ENCODE measurements at regions of chr2 and their contacts with region 1.

Region 1: DNA sequence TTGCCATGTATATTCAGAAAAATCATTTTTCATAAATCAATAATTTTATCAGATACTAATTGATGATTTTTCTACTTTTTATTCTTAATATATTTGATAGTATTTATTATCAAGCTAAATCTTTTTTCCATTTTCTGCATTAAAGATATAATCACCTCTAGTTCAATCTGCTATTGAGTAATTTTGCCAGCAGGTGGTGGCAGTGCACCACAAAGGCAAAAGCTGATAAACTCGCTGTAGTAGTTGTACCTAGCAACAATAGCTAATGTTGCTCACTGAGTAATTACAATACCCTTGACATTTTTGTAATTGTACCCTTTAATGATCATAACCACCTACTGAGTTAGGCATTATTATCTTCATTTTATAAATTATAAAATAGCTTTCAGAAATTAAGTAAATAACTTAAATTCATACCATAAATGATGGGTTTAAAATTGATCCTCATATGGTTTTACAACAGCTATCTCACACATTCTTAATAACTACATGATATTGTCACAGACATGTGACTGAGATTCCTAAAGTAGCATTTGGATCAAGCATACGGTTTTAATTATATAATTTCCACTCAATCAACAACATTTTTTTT is 52.0 kb upstream of the CALCRL start:
- DNase-seq: peak; percentile 38
- H3K4me3 ChIP-seq: no peak overlapping the region
- H3K27ac ChIP-seq: no peak overlapping the region
- H3K4me1 ChIP-seq: no peaks in the 10 kb centered on the region
- H3K27me3 ChIP-seq: no peaks in the 10 kb centered on the region
- CTCF ChIP-seq: peak; percentile 56 to 84 (median 78)
- POLR2A ChIP-seq: no peak

Region 2: DNA sequence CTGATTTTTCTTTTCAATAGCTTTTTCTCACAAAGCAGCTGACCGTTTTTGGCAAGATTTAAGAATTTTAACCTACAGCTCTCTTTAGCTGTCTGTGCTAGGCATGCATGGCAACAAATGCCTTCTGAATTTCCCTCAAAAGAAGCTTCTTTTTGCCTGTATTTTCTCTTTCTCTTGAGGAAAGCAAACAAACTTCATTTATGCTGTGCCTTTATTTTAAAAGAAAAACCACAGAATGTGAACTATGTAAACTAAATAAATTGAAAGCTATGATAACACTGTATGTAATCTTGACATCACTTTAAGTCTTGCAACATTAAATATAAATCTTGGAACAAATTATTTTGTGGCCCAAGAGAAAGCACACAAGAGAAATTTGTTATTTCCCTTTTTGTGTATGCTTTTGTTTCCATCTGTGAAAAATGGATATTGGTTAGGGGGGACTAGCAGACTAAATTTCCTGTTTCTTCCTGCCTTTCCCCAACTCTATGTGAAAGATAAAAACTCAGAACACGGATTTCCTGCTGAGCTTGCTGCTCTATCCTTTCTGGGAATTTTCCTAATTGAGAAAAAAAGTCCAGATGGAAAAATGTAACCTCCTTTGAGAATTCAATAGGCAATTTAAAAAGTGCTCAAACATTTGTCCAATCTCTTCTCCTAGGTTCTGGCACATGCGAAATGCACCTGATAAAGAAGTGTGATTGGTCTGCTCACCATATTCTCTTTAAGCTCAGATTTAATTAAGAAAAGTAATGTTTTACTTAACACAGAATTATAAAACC is 75.1 kb after region 1 on chr2:
- intact Hi-C with region 1: loop called (anchors 5 kb)
- DNase-seq: no peak
- H3K4me3 ChIP-seq: no peak overlapping the region
- H3K27ac ChIP-seq: no peak overlapping the region
- H3K4me1 ChIP-seq: no peaks in the 10 kb centered on the region
- H3K27me3 ChIP-seq: no peaks in the 10 kb centered on the region
- CTCF ChIP-seq: no peak
- POLR2A ChIP-seq: no peak

Region 3: GRCh38 chr2:187842978-187843847 is 343.2 kb after region 1 on chr2:
- intact Hi-C with region 1: loop called (anchors 10 kb)
- DNase-seq: no peak
- H3K4me3 ChIP-seq: no peak overlapping the region
- H3K27ac ChIP-seq: no peak overlapping the region
- H3K4me1 ChIP-seq: no peaks in the 10 kb centered on the region
- H3K27me3 ChIP-seq: no peaks in the 10 kb centered on the region
- CTCF ChIP-seq: peak; percentile 17 to 58 (median 48)
- POLR2A ChIP-seq: no peak

Region 4: GRCh38 chr2:188512456-188512855 is 1012.4 kb after region 1 on chr2:
- intact Hi-C with region 1: loop called (anchors 10 kb)
- DNase-seq: no peak
- H3K4me3 ChIP-seq: no peak overlapping the region
- H3K27ac ChIP-seq: no peak overlapping the region
- H3K4me1 ChIP-seq: no peaks in the 10 kb centered on the region
- H3K27me3 ChIP-seq: no peaks in the 10 kb centered on the region
- CTCF ChIP-seq: peak; percentile 12 to 58 (median 36)
- POLR2A ChIP-seq: no peak

Measured in prostate gland (tissue), 2 donors.